Gastrocnemius medialis (tissue), 4 donors: ENCODE measurements at regions of chr20 and their contacts with region 1.

Region 1: GRCh38 chr20:1118336-1119127 is at the start of gene PSMF1:
- DNase-seq: peak; percentile 89 to 93
- ATAC-seq: peak; percentile 92 to 96
- H3K4me3 ChIP-seq: peak within 1 kb of the TSS; percentile 85 to 100 (median 97)
- H3K27ac ChIP-seq: peak within 1 kb of the TSS; percentile 89 to 96 (median 92)
- H3K4me1 ChIP-seq: peaks cover 48 to 53% of the 10 kb centered on the region in 2 donors
- H3K27me3 ChIP-seq: no peaks in the 10 kb centered on the region
- CTCF ChIP-seq: peak in 4 of 5 experiments; percentile 4 to 35 (median 21)
- POLR2A ChIP-seq: peak; percentile 33 to 43
- total RNA-seq, gene PSMF1: 174 to 433 (median 247) TPM

Region 2: DNA sequence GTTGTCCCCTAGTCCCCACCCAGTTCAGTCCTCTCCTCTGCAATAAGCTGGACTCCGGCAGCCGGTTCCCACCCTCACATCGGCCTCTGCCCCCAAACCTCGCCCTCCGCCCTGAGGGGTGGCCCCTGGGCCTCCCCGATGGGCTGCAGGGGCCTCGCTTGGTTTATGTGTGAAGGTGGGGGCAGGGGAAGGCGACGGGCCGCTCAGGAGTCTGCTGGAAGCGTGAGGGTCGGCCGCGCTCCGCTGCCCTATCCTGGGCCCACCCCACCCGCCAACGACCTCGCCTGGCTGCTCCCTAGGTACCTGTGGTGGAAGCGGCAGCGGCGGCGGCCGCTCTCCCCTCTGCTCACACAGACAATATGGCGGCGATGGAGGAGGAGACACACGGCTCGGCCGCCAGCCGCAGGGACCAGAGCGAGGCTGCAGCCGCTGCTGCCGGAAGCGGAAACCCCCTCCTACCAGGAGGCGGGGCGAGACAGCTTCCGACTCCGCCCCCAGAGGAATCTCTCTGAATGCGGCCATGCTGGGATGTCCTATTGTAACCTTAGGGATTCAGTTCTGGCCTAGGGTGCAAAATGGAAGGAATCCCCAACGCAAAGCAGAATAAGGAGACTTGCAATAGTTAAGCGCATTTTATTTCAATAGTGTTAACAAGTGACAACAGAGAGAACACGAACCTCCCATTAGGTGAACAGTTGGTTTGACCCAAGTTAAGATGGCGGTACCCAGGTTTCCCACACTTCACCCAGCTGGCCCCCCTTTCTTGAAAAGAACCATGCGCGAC is 575.0 kb before region 1 on chr20 and contains the start of gene CSNK2A1:
- in situ Hi-C with region 1: no loop called
- intact Hi-C with region 1: loop called (anchors 10 kb)
- DNase-seq: peak; percentile 86 to 93
- ATAC-seq: peak; percentile 97
- H3K4me3 ChIP-seq: peak within 1 kb of the TSS; percentile 77 to 100 (median 95)
- H3K27ac ChIP-seq: peak within 1 kb of the TSS; percentile 88 to 99 (median 96)
- H3K4me1 ChIP-seq: peaks cover 29 to 33% of the 10 kb centered on the region in 2 donors
- H3K27me3 ChIP-seq: no peaks in the 10 kb centered on the region
- CTCF ChIP-seq: no peak
- POLR2A ChIP-seq: peak; percentile 86 to 90
- total RNA-seq, gene CSNK2A1: 108 to 180 (median 157) TPM

Region 3: DNA sequence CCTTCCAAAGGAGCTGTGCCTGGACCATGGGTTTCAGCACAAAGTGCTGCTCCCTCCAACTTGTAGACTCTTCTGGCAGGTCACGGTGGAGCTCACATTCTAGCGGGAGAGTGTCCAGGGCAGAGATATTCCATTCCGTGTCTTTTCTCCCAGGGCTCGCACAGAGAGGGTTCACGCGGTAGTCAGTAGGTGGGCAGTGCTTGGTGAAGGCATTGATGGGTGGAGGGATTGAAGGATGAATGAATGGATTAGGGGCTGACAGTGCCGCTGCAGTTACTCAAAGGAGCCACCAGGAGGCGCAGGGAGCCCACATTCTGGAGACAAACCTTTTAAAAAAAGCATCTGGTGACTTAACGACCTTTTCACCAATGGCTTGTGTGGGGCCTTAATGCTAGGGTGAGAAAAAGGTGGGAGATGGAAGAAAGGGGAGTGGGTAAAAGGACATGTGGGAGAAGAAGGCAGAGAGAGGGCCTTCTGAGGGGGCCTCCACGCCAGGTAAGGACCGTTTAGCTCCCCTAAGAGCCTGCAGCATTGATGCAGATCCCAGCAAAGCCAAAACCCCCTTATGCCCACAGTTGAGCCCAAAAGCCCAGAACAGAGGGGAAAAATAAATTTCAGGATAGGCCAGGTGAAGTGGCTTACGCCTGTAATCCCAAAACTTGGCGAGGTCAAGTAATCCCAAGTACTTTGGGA is 302.5 kb before region 1 on chr20:
- in situ Hi-C with region 1: loop called in 1 of 4 experiments (anchors 25 kb)
- intact Hi-C with region 1: no loop called
- DNase-seq: peak; percentile 27 to 34
- ATAC-seq: peak; percentile 30 to 56
- H3K4me3 ChIP-seq: no peak overlapping the region
- H3K27ac ChIP-seq: no peak overlapping the region
- H3K4me1 ChIP-seq: peaks cover 6% of the 10 kb centered on the region in 2 donors
- H3K27me3 ChIP-seq: no peaks in the 10 kb centered on the region
- CTCF ChIP-seq: peak; percentile 95 to 98 (median 97)
- POLR2A ChIP-seq: no peak

Region 4: GRCh38 chr20:844473-845225 is 273.9 kb before region 1 on chr20:
- in situ Hi-C with region 1: loop called in 1 of 4 experiments (anchors 10 kb)
- intact Hi-C with region 1: loop called (anchors 5 kb)
- DNase-seq: peak; percentile 85 to 89
- ATAC-seq: peak; percentile 99 to 100
- H3K4me3 ChIP-seq: peak overlapping the region; percentile 52 to 63 (median 54)
- H3K27ac ChIP-seq: peak overlapping the region in 1 of 4 donors; percentile 59
- H3K4me1 ChIP-seq: peaks cover 8 to 12% of the 10 kb centered on the region in 2 donors
- H3K27me3 ChIP-seq: peaks cover 0 to 2% (median 0%) of the 10 kb centered on the region in 3 donors
- CTCF ChIP-seq: no peak
- POLR2A ChIP-seq: no peak

Region 5: GRCh38 chr20:1225783-1226654 is 107.5 kb after region 1 on chr20 and contains the start of gene RAD21L1:
- in situ Hi-C with region 1: no loop called
- intact Hi-C with region 1: loop called (anchors 5 kb)
- DNase-seq: peak; percentile 58 to 68
- ATAC-seq: peak; percentile 83 to 88
- H3K4me3 ChIP-seq: peak within 1 kb of the TSS; percentile 59 to 89 (median 68)
- H3K27ac ChIP-seq: peak within 1 kb of the TSS in 3 of 4 donors; percentile 38 to 58 (median 49)
- H3K4me1 ChIP-seq: peaks cover 0 to 11% of the 10 kb centered on the region in 2 donors
- H3K27me3 ChIP-seq: peaks cover 9 to 32% (median 16%) of the 10 kb centered on the region in 3 donors
- CTCF ChIP-seq: no peak
- POLR2A ChIP-seq: peak in 1 of 2 donors; percentile 33
- total RNA-seq, gene RAD21L1: 0.18 TPM in 1 of 4 donors, not detected in the others

Region 6: GRCh38 chr20:1281279-1282057 is 162.9 kb after region 1 on chr20:
- in situ Hi-C with region 1: no loop called
- intact Hi-C with region 1: no loop called
- DNase-seq: no peak
- ATAC-seq: no peak
- H3K4me3 ChIP-seq: no peak overlapping the region
- H3K27ac ChIP-seq: peak overlapping the region; percentile 58 to 71 (median 64)
- H3K4me1 ChIP-seq: peaks cover 14 to 19% of the 10 kb centered on the region in 2 donors
- H3K27me3 ChIP-seq: no peaks in the 10 kb centered on the region
- CTCF ChIP-seq: no peak
- POLR2A ChIP-seq: no peak

Region 7: GRCh38 chr20:1466211-1467081 is 347.9 kb after region 1 on chr20 and contains the start of gene NSFL1C:
- in situ Hi-C with region 1: loop called in 1 of 4 experiments (anchors 25 kb)
- intact Hi-C with region 1: loop called (anchors 1 kb)
- DNase-seq: peak; percentile 91 to 92
- ATAC-seq: peak; percentile 92 to 93
- H3K4me3 ChIP-seq: peak within 1 kb of the TSS; percentile 84 to 98 (median 96)
- H3K27ac ChIP-seq: peak within 1 kb of the TSS; percentile 92 to 98 (median 95)
- H3K4me1 ChIP-seq: peaks cover 25 to 39% of the 10 kb centered on the region in 2 donors
- H3K27me3 ChIP-seq: no peaks in the 10 kb centered on the region
- CTCF ChIP-seq: peak; percentile 85 to 100 (median 99)
- POLR2A ChIP-seq: peak; percentile 75 to 93
- total RNA-seq, gene NSFL1C: 68.0 to 91.4 (median 80.6) TPM

Region 8: DNA sequence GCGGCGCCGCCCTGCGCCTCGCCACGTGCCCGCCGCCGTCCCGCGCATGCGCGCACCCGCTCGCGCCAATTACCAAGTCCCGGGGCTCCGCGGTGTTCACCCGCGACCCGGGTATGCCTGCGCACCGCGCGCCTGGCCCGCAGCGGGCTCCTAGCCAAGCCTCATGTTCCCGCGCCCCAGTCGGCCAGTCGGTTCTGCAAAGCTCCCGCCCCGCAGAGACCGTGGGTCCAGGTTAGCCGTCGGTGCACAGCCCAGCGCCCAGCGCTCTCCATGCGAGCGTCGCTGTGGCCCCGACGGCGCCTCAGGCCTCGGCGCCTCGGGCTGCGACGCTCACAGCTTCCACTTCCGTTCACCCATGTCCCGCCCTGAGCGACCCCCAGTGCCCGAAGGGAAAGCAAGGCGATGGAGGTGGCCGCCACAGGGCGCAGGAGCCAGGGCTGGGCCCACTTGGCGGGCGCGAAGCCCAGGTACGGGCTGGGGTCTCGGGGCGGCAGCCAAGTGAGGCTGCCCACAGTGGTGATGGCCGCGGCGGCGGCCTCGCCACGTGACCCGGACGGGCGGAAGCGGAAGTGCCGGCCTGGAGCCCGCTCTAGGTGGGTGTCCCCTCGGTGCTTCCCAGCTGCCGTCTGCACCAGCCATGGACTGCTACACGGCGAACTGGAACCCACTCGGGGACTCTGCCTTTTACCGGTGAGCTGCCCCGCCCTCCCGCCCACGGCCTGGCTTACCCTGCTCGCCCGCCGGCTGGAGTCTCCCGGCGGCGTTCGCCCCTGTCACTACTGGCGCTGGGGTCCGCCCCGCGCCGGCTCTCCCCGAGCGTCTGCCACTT is 1721.8 kb after region 1 on chr20 and contains the starts of genes PCED1A and VPS16:
- in situ Hi-C with region 1: loop called in 1 of 4 experiments (anchors 25 kb)
- intact Hi-C with region 1: no loop called
- DNase-seq: peak; percentile 71 to 82
- ATAC-seq: peak; percentile 95 to 97
- H3K4me3 ChIP-seq: peak within 1 kb of the TSS; percentile 88 to 98 (median 90)
- H3K27ac ChIP-seq: peak within 1 kb of the TSS; percentile 83 to 97 (median 94)
- H3K4me1 ChIP-seq: peaks cover 16 to 23% of the 10 kb centered on the region in 2 donors
- H3K27me3 ChIP-seq: no peaks in the 10 kb centered on the region
- CTCF ChIP-seq: no peak
- POLR2A ChIP-seq: peak; percentile 42 to 60
- total RNA-seq, gene PCED1A: 2.6 to 9.3 (median 5.7) TPM
- total RNA-seq, gene VPS16: 17.3 to 26.4 (median 21.6) TPM